ENCODE measurements at regions of chr16 and their contacts with region 1.

Region 1: DNA sequence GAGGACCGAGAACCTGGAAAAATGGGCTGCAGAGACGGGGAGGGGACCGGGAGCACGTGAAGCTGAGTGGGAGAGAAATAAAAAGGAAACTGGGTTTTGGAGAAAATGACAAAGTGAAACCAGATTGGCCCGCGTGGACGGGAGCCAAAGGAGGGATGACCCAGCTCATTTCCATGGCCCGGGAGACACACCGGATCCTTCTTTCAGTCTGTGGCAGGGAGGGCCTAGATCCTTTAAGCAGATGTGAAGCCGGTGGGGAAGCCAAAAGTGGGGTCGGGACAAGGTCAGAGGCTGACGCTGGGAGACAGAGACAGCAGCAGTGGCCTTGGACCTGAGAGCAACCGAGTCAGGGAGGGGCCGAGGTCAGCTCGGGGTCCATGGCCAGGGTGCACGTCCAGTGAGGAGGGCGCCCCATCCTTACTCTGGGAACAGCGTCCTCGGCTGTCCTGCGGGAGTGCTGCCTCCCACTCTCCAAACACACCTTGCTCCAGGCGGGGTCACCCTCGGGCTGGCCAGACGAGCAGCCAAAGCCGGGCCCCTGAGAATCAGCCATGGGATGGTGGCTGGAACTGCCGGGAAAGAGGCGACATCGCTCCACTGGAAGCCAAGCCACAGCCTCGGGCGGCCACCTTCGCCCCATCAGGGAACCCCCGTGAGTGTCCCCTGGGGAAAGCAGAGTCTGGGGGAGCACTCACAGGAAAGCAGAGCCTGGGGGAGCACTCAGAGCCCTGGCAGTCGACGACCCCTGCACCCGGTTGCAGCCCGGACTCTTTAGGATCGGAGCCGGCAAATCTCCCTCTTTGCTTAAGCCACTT is 17.3 kb downstream of the CA5A start:
- DNase-seq: no peak
- H3K4me3 ChIP-seq: no peak overlapping the region
- H3K27ac ChIP-seq: no peak overlapping the region
- H3K4me1 ChIP-seq: no peaks in the 10 kb centered on the region
- H3K27me3 ChIP-seq: peaks cover 5% of the 10 kb centered on the region; the same call in 1 of the 2 replicates
- CTCF ChIP-seq: no peak

Region 2: GRCh38 chr16:88264611-88265285 is 345.7 kb after region 1 on chr16:
- CTCF ChIA-PET with region 1: no interaction called
- POLR2A ChIA-PET with region 1: no interaction called
- intact Hi-C with region 1: no loop called
- DNase-seq: peak; percentile 93 to 99
- H3K4me3 ChIP-seq: peak overlapping the region; percentile 45; the same call in 1 of the 2 replicates
- H3K27ac ChIP-seq: peak overlapping the region; percentile 58
- H3K4me1 ChIP-seq: peaks cover 16% of the 10 kb centered on the region; the same call in 1 of the 2 replicates
- H3K27me3 ChIP-seq: no peaks in the 10 kb centered on the region
- CTCF ChIP-seq: no peak

Region 3: GRCh38 chr16:88413631-88414030 is 494.6 kb after region 1 on chr16:
- CTCF ChIA-PET with region 1: interaction called, 13 read pairs
- POLR2A ChIA-PET with region 1: no interaction called
- intact Hi-C with region 1: no loop called
- DNase-seq: no peak
- H3K4me3 ChIP-seq: no peak overlapping the region
- H3K27ac ChIP-seq: no peak overlapping the region
- H3K4me1 ChIP-seq: no peaks in the 10 kb centered on the region
- H3K27me3 ChIP-seq: no peaks in the 10 kb centered on the region
- CTCF ChIP-seq: no peak